ENCODE measurements at regions of chr5 and their contacts with region 1.

Region 1: DNA sequence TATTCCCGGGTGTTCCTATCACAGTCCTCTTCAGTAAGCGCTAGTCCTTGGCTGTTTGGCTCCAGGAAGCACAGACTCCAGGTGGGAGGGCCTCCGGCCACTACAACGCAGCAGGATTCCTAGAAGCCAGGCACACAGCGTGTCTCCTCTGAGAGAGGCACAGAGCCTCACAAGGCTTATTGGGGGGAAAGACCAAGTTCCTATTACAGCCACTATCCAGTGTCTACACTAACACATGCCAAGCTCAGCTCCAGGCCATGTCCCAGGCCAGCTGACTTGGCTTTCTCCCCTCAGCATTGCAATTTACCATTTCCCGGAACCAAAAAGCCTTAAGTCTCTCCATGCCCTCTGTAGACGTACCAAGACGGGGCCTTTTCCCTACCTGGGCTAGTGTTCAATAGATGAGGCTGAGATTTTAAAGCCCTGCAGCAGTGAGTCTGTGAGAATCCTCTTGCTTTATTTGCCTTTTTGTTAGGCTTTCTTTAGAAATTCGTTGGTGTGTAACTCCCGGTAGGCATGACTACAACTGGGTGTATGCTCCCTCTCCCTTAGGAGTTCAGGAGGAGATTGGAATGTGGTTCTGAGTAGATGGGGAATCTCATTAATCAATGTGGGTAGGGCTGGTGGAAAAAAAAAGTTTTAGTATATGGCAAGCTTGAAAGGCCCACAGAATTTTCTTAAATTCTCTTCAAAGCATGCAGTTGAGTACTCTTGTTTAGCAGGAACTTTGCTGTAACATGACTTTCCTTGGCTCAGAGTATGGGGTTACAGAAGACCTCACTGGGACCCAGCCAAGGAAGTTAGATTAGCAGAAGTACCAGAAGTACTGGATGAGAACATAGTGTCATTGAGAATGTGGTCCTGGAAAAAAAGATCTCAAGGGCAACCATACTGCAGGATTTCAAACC is 84.3 kb upstream of the SLC1A3 start:
- DNase-seq: no peak
- H3K4me3 ChIP-seq: no peak overlapping the region
- H3K27ac ChIP-seq: peak overlapping the region in 5 of 59 donors; percentile 1 to 19 (median 14)
- H3K27me3 ChIP-seq: no peaks in the 10 kb centered on the region
- CTCF ChIP-seq: no peak

Region 2: DNA sequence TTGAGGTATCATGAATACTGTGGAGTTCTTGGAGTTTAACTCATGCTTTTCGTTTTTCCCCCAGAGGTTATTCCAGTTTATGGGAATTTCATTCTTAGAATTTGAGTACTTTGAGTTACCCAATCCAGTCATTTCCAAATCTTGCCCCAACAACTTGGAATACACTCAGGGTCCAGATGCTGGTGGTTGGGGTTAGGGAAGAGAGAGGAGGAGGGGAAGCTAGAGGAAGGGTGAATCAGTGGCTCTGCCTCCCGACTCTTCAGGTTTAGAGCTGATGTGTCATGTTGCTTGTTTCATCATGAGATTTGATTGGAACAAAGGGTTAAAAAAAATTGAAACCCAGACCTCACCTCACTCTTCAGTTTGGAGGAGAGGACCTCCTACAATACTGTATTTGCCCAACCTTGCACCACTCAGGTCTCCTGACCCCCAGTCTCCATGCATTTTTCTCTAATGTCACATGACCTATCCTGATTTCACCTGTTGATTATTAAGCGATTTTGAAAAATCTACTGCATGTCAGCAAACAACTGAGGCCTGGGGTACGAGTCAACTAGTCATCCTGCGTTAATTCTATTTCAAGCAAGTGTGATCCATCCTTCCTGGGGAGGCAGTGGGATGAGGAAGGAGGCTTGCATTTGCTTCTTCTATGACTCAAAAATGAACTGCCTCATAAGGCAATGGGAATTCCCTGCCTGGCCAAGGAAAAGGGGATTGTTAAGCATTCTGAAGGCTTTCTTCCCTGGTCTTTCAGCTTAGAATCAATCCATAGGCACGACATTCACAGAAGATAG is 78.1 kb after region 1 on chr5:
- intact Hi-C with region 1: loop called in 1 of 2 experiments (anchors 10 kb)
- DNase-seq: no peak
- H3K4me3 ChIP-seq: peak overlapping the region in 17 of 59 donors; percentile 0 to 34 (median 16)
- H3K27ac ChIP-seq: peak overlapping the region; percentile 58 to 99 (median 96)
- H3K27me3 ChIP-seq: peaks cover 0 to 7% (median 0%) of the 10 kb centered on the region in 45 donors
- CTCF ChIP-seq: no peak

Region 3: GRCh38 chr5:36763454-36763853 is 241.4 kb after region 1 on chr5:
- intact Hi-C with region 1: no loop called
- DNase-seq: no peak
- H3K4me3 ChIP-seq: no peak overlapping the region
- H3K27ac ChIP-seq: no peak overlapping the region
- H3K27me3 ChIP-seq: no peaks in the 10 kb centered on the region
- CTCF ChIP-seq: no peak

Region 4: GRCh38 chr5:36820900-36821299 is 298.8 kb after region 1 on chr5:
- intact Hi-C with region 1: no loop called
- DNase-seq: no peak
- H3K4me3 ChIP-seq: no peak overlapping the region
- H3K27ac ChIP-seq: no peak overlapping the region
- H3K27me3 ChIP-seq: no peaks in the 10 kb centered on the region
- CTCF ChIP-seq: no peak